Pancreas (tissue), 10 donors: ENCODE measurements at regions of chr15 and their contacts with region 1.

Region 1: DNA sequence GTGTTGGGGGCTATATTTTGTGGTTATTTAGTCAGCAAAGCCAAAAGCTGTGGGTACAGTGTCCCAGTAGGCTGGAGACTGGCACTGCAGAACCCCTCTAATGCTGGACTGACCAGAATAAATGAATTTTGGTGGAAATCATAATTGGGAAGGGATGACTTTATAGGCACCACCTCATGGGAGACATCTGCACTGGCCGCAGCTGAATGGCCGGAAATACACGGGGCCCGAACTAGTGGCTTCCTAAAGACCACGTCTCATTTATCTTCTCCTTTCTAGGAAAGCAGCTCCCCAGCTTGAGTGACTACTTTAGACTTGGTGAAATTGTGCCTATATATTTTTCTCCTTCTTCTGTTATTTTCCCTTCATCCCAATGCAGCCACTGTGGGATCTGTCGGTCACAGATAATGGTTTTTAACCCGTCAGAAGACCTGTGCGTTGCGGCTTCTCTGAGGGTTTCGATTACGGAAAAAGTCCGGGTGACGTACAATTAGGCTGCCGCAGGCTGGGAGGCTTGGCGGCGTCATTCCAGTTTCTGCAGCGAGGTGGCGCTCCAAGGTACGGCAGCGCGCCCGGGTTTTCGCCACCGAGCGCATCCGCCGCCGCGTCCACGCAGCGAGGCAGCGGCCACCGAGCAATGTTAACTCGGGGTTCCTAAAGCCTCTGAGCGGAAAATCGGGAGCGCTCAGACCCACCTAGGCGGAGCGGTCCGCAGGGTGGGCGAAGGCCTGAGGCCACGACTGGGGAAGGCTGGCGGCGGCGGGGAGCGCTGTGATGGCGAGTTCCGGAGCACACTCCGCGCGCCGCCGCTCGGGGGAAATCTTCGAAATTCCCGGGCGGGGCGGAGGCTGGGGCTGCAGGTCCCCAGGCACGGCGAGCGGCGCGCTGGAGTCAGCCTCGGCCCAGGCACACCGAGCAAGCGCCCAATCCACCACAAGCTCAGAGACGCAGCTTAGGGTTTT is 26.3 kb downstream of the NR2F2 start:
- DNase-seq: peak; percentile 67 to 97 (median 82)
- ATAC-seq: peak; percentile 84 to 89 (median 86)
- H3K4me3 ChIP-seq: peak overlapping the region; percentile 37 to 76 (median 60)
- H3K27ac ChIP-seq: peak overlapping the region in 2 of 4 donors; percentile 36 to 57
- H3K4me1 ChIP-seq: no peaks in the 10 kb centered on the region
- H3K27me3 ChIP-seq: peaks cover 0 to 39% (median 3%) of the 10 kb centered on the region in 4 donors
- CTCF ChIP-seq: peak; percentile 89 to 99 (median 97)

Region 2: DNA sequence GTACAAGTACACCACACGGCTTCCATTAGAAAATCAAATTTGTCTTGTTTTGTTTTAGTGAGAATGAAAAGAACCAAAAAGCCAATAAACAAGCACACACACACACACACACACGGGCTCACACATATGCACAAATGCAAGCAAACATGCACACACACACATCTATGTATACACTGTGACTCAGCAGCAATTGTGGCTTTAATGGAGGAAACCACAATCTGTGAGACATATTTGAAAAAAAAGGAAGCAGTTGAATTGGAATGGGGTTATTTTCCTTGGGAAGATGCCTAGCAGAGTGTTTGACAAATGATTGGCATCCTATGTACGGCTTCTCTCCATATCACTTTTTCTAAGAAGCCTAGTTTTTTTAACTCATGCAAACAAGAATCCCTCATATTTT is 1402.6 kb after region 1 on chr15:
- intact Hi-C with region 1: loop called in 1 of 3 experiments (anchors 10 kb)
- DNase-seq: no peak
- ATAC-seq: no peak
- H3K4me3 ChIP-seq: no peak overlapping the region
- H3K27ac ChIP-seq: no peak overlapping the region
- H3K4me1 ChIP-seq: no peaks in the 10 kb centered on the region
- H3K27me3 ChIP-seq: no peaks in the 10 kb centered on the region
- CTCF ChIP-seq: no peak